Endothelial cell of umbilical vein (primary cell): ENCODE measurements at regions of chr3 and their contacts with region 1.

Region 1: DNA sequence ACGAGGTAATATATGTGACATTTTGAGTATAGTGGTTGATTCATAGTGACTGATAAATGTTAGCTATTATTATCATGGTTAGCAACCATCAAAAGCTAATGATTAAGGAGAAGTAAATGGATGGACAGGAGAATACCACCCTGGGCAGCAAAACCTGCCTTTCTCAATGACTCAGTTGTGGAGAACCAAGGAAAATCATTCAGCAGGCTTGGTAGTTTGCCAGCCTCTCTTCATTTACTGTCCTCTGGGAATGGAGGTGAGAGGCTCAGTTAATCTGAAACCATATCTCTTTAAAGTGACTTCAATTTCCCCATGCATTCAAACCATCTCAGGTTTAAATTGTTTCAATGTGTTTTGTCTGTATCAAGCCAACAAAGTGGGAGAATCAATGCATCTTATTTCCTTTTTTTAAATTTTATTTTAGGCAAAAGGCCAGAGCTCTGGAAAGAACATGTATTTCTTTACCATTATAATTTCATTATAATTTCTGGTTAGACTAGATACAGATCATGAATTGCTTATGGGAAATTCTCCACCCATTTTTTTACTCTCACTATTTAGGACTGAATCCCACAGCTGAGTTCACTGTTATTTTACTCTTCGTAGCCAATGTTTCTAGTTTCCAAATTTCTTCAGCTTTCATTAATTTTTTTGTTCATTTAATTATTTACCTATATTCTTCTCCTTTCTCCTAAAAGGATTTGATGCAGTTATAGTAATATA is 2.7 kb downstream of the TM4SF18 start:
- DNase-seq: no peak
- H3K4me3 ChIP-seq: peak overlapping the region in 1 of 3 experiments; percentile 92
- H3K27ac ChIP-seq: peak overlapping the region; percentile 92
- H3K4me1 ChIP-seq: peaks cover 54% of the 10 kb centered on the region
- H3K27me3 ChIP-seq: no peaks in the 10 kb centered on the region
- CTCF ChIP-seq: no peak
- POLR2A ChIP-seq: no peak

Region 2: GRCh38 chr3:149044339-149045083 is 286.3 kb before region 1 on chr3:
- CTCF ChIA-PET with region 1: no interaction called
- POLR2A ChIA-PET with region 1: no interaction called
- dilution Hi-C with region 1: no loop called
- intact Hi-C with region 1: no loop called
- DNase-seq: no peak
- H3K4me3 ChIP-seq: no peak overlapping the region
- H3K27ac ChIP-seq: no peak overlapping the region
- H3K4me1 ChIP-seq: peaks cover 14% of the 10 kb centered on the region
- H3K27me3 ChIP-seq: no peaks in the 10 kb centered on the region
- CTCF ChIP-seq: no peak
- POLR2A ChIP-seq: no peak

Region 3: GRCh38 chr3:149252272-149252671 is 78.5 kb before region 1 on chr3:
- CTCF ChIA-PET with region 1: no interaction called
- POLR2A ChIA-PET with region 1: no interaction called
- dilution Hi-C with region 1: no loop called
- intact Hi-C with region 1: no loop called
- DNase-seq: no peak
- H3K4me3 ChIP-seq: no peak overlapping the region
- H3K27ac ChIP-seq: no peak overlapping the region
- H3K4me1 ChIP-seq: peaks cover 15% of the 10 kb centered on the region
- H3K27me3 ChIP-seq: no peaks in the 10 kb centered on the region
- CTCF ChIP-seq: no peak
- POLR2A ChIP-seq: no peak

Region 4: DNA sequence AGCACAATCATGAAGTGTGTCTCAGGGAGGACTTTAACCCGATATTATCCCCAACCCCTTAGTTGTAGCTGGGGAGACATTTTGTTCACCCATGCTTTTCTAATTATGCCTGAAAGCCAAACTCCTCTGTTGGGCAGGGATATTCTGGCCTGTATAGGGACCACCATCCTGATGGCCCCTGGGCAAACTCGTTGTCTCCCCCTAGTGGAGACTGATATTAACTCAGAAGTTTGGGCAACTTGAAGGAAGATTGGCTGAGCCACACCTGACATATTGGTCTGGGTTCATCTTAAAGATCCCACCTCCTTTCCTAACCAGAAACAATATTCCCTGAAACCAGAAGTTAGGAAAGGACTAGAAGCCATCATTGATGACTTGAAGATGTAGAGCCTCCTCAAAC is 39.6 kb before region 1 on chr3:
- CTCF ChIA-PET with region 1: interaction called, 4 read pairs
- POLR2A ChIA-PET with region 1: no interaction called
- dilution Hi-C with region 1: no loop called
- intact Hi-C with region 1: loop called (anchors 5 kb)
- DNase-seq: no peak
- H3K4me3 ChIP-seq: no peak overlapping the region
- H3K27ac ChIP-seq: no peak overlapping the region
- H3K4me1 ChIP-seq: no peaks in the 10 kb centered on the region
- H3K27me3 ChIP-seq: no peaks in the 10 kb centered on the region
- CTCF ChIP-seq: peak; percentile 30 to 48
- POLR2A ChIP-seq: no peak

Region 5: GRCh38 chr3:149352556-149352955 is 21.8 kb after region 1 on chr3:
- CTCF ChIA-PET with region 1: interaction called, 3 read pairs
- POLR2A ChIA-PET with region 1: no interaction called
- dilution Hi-C with region 1: no loop called
- intact Hi-C with region 1: loop called (anchors 1 kb)
- DNase-seq: peak; percentile 70
- H3K4me3 ChIP-seq: no peak overlapping the region
- H3K27ac ChIP-seq: no peak overlapping the region
- H3K4me1 ChIP-seq: peaks cover 12% of the 10 kb centered on the region
- H3K27me3 ChIP-seq: no peaks in the 10 kb centered on the region
- CTCF ChIP-seq: peak; percentile 74
- POLR2A ChIP-seq: no peak

Region 6: GRCh38 chr3:149377408-149378377 is 46.9 kb after region 1 on chr3 and contains the start of gene TM4SF1:
- CTCF ChIA-PET with region 1: interaction called, 8 read pairs
- POLR2A ChIA-PET with region 1: interaction called, 28 read pairs
- dilution Hi-C with region 1: no loop called
- intact Hi-C with region 1: loop called (anchors 1 kb)
- DNase-seq: peak; percentile 100
- H3K4me3 ChIP-seq: peak within 1 kb of the TSS; percentile 81 to 98 (median 93)
- H3K27ac ChIP-seq: peak within 1 kb of the TSS; percentile 90
- H3K4me1 ChIP-seq: peaks cover 45% of the 10 kb centered on the region
- H3K27me3 ChIP-seq: no peaks in the 10 kb centered on the region
- CTCF ChIP-seq: peak in 1 of 2 donors; percentile 4
- POLR2A ChIP-seq: peak; percentile 100
- total RNA-seq, gene TM4SF1: 559 and 619 TPM in 2 replicates

Region 7: DNA sequence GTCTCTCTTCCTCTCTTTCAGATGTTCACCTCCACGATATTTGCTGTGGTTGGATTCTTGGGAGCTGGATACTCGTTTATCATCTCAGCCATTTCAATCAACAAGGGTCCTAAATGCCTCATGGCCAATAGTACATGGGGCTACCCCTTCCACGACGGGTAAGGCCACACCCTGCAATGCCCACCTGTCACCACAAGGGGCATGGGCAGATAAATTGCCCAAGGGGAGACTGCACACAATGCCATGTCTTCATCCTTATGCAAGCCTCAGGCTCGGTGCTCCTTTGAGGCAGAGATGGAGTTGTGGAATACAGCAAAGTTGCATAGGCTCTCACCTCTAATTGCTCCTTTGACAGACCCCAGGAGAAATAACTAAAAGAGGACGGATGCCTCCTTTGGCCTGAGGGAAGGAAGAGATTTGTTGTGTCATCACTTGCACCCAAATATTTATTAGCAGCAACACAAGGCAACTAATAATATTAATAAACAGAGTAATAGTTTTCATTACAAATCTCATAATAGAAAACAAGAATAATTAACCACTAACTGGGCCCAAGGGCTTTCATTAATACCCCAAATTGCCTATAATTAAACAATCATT is 156.9 kb after region 1 on chr3:
- CTCF ChIA-PET with region 1: interaction called, 13 read pairs
- POLR2A ChIA-PET with region 1: interaction called, 3 read pairs
- dilution Hi-C with region 1: no loop called
- intact Hi-C with region 1: no loop called
- DNase-seq: no peak
- H3K4me3 ChIP-seq: no peak overlapping the region
- H3K27ac ChIP-seq: no peak overlapping the region
- H3K4me1 ChIP-seq: peaks cover 3% of the 10 kb centered on the region
- H3K27me3 ChIP-seq: no peaks in the 10 kb centered on the region
- CTCF ChIP-seq: peak; percentile 40 to 53
- POLR2A ChIP-seq: no peak